HepG2 (cell line): ENCODE measurements at regions of chr2 and their contacts with region 1.

Region 1: DNA sequence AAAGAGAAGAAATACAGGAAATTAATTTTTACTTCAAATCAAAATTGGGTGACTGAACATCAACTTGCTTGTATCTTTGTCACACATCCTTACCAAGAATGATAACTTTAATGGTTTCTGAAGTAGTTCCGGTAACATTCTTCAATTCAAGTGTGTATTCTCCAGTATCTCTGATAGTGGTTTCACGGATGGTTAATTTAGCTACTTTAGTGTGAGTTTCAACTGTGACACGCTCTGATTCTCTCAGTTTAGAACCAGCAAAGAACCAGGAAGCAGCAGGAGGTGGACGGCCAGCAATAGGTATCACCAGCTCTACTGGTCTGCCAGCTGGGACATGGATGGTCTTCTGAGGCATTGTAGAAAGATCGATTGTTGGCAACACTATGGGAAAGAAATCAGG is 62.3 kb downstream of the PLEKHA3 start:
- DNase-seq: no peak
- ATAC-seq: no peak
- H3K4me3 ChIP-seq: no peak overlapping the region
- H3K27ac ChIP-seq: no peak overlapping the region
- H3K4me1 ChIP-seq: no peaks in the 10 kb centered on the region
- H3K27me3 ChIP-seq: no peaks in the 10 kb centered on the region; a peak in 1 of 5 replicates
- CTCF ChIP-seq: no peak
- EP300 ChIP-seq: no peak
- POLR2A ChIP-seq: no peak
- RAD21 ChIP-seq: no peak

Region 2: DNA sequence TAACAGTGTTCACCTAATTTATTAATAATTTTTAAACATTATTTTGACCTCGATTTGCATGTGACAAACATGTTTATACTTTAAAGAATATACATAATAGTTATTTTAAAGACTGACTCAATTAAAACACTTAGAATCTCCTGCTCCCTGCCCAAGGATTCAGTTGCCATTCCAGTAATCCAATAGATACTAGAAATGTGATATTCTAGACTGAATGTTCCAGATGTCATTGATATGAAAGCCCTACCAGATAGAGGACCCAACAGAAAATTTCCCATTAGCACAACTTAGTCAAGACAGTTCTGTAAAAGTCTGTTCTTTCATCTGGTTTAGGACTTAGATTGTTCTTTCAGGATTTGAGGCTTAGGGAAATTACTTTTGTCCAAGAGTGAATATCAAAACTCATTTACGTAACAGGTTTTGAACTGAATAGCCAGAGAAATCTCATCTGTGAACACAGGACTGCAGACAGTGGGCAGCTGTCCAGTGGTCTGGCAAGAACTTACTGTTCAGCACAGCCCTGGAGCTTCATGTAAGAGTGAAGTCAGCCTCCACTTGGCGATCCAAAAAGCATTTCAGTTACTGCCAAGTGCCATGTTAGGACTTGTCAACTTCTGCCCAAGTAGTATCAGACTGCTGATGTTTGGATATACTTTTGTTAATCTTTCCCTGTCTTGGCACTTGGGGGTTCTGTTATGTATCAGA is 270.8 kb before region 1 on chr2:
- CTCF ChIA-PET with region 1: no interaction called
- POLR2A ChIA-PET with region 1: no interaction called
- in situ Hi-C with region 1: no loop called
- intact Hi-C with region 1: no loop called
- DNase-seq: no peak
- ATAC-seq: no peak
- H3K4me3 ChIP-seq: no peak overlapping the region
- H3K27ac ChIP-seq: no peak overlapping the region
- H3K4me1 ChIP-seq: no peaks in the 10 kb centered on the region
- H3K27me3 ChIP-seq: no peaks in the 10 kb centered on the region
- CTCF ChIP-seq: no peak
- EP300 ChIP-seq: no peak
- POLR2A ChIP-seq: no peak
- RAD21 ChIP-seq: no peak

Region 3: GRCh38 chr2:178584666-178585065 is 42.1 kb after region 1 on chr2:
- CTCF ChIA-PET with region 1: no interaction called
- POLR2A ChIA-PET with region 1: no interaction called
- in situ Hi-C with region 1: no loop called
- intact Hi-C with region 1: loop called (anchors 1 kb)
- DNase-seq: no peak
- ATAC-seq: no peak
- H3K4me3 ChIP-seq: no peak overlapping the region
- H3K27ac ChIP-seq: no peak overlapping the region
- H3K4me1 ChIP-seq: no peaks in the 10 kb centered on the region
- H3K27me3 ChIP-seq: peaks cover 0 to 7% of the 10 kb centered on the region in 2 experiments; a peak in 1 of 5 replicates
- CTCF ChIP-seq: no peak
- EP300 ChIP-seq: no peak
- POLR2A ChIP-seq: no peak
- RAD21 ChIP-seq: no peak